Posterior vena cava (tissue), 2 donors: ENCODE measurements at regions of chr1 and their contacts with region 1.

Region 1: DNA sequence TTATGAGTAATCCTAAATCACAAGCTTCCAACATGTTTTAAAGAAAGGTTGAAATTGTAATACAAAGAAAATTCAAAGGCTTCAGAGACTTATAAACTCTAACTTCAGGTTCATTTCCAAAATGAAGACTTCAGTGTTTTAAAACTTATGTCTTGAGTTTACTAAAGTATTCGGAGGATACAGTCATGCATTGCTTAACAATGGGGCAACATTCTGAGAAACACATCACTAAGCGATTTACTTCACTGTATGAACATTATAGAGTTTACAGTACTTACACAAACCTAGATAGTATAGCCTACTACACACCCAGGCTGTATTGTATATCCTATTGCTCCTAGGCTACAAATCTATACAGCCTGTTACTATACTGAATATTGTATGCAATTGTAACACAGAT is 38.3 kb downstream of the CEP170 start:
- DNase-seq: no peak

Region 2: DNA sequence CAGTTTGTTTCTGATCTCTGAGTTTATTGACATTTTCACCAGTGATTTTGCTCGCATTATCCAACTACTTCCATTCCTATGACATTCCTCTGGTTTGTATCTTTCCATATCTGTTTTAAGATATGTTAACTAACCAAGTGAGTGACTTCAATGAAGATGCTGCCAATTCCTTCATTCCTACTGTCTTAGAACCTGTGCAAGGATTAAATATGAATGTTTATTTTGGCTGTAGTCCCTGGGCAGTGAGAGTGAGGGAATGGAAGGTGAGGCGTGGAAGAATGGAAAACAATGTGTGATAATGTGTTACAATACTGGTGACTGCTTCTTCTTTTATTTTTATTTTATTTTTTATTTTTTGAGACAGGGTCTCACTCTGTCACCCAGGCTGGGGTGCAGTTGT is 222.1 kb after region 1 on chr1:
- intact Hi-C with region 1: loop called in 1 of 2 experiments (anchors 5 kb)
- DNase-seq: no peak